B cell (primary cell): ENCODE measurements at regions of chr14 and their contacts with region 1.

Region 1: GRCh38 chr14:100056964-100057795 is 8.0 kb upstream of the EVL start:
- DNase-seq: peak; percentile 66
- ATAC-seq: peak; percentile 77
- H3K4me3 ChIP-seq: no peak overlapping the region
- H3K4me3 Mint-ChIP-seq: no peak overlapping the region
- H3K27ac ChIP-seq: no peak overlapping the region
- H3K27ac Mint-ChIP-seq: peak overlapping the region; percentile 57
- H3K4me1 ChIP-seq: peaks cover 16% of the 10 kb centered on the region in 2 donors
- H3K4me1 Mint-ChIP-seq: peaks cover 31% of the 10 kb centered on the region
- H3K27me3 ChIP-seq: no peaks in the 10 kb centered on the region
- H3K27me3 Mint-ChIP-seq: no peaks in the 10 kb centered on the region
- CTCF ChIP-seq: peak; percentile 69

Region 2: DNA sequence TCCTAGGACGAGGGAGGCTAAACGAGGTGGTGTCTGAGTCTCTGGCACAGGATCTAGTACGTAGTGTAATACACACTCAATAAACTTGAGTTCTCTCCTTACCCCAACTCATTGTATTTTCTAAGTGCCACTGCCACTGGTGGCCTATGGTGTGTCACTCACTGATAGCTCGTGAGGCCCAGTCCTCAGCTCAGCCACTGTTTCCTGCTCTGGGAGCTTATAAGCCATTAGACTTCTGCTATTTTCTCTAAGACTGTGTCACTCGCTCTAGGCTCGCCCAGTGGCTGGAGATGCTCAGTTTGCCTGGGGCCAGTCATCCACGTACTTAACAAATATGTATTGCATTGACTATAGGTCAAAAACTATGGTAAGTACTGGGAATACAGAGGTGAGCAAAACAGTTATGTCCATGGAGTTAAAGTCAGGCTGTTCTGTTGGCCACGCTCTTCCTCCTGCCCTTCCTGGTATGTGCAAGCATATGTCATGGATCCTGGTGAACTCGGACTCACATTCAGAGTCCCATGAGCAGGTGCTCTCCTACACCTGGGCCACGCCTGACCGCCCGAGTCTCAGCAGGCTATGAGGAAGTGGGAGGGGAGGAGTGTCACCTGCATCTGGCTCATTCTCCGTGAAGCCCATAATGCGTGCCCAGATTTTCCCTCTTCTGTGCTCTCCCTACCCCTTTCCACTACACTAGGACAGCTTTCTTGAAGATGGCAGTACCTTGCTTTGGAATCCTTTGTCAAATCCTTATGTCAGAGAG is 60.6 kb after region 1 on chr14:
- CTCF ChIA-PET with region 1: interaction called, 495 read pairs
- POLR2A ChIA-PET with region 1: interaction called, 13 read pairs
- intact Hi-C with region 1: no loop called
- DNase-seq: peak; percentile 31
- ATAC-seq: peak; percentile 47
- H3K4me3 ChIP-seq: no peak overlapping the region
- H3K4me3 Mint-ChIP-seq: no peak overlapping the region
- H3K27ac ChIP-seq: peak overlapping the region; percentile 2 to 62
- H3K27ac Mint-ChIP-seq: peak overlapping the region; percentile 89
- H3K4me1 ChIP-seq: peaks cover 11 to 14% of the 10 kb centered on the region in 2 donors
- H3K4me1 Mint-ChIP-seq: peaks cover 28% of the 10 kb centered on the region
- H3K27me3 ChIP-seq: no peaks in the 10 kb centered on the region
- H3K27me3 Mint-ChIP-seq: no peaks in the 10 kb centered on the region
- CTCF ChIP-seq: no peak